ENCODE measurements at regions of chr14 and their contacts with region 1.

Region 1: GRCh38 chr14:24160850-24161804 is at the start of gene IRF9:
- DNase-seq: peak; percentile 94
- CTCF ChIP-seq: peak; percentile 92

Region 2: GRCh38 chr14:24058260-24058950 is 102.7 kb before region 1 on chr14:
- CTCF ChIA-PET with region 1: interaction called, 14 read pairs
- POLR2A ChIA-PET with region 1: no interaction called
- DNase-seq: peak; percentile 70
- CTCF ChIP-seq: peak; percentile 73

Region 3: DNA sequence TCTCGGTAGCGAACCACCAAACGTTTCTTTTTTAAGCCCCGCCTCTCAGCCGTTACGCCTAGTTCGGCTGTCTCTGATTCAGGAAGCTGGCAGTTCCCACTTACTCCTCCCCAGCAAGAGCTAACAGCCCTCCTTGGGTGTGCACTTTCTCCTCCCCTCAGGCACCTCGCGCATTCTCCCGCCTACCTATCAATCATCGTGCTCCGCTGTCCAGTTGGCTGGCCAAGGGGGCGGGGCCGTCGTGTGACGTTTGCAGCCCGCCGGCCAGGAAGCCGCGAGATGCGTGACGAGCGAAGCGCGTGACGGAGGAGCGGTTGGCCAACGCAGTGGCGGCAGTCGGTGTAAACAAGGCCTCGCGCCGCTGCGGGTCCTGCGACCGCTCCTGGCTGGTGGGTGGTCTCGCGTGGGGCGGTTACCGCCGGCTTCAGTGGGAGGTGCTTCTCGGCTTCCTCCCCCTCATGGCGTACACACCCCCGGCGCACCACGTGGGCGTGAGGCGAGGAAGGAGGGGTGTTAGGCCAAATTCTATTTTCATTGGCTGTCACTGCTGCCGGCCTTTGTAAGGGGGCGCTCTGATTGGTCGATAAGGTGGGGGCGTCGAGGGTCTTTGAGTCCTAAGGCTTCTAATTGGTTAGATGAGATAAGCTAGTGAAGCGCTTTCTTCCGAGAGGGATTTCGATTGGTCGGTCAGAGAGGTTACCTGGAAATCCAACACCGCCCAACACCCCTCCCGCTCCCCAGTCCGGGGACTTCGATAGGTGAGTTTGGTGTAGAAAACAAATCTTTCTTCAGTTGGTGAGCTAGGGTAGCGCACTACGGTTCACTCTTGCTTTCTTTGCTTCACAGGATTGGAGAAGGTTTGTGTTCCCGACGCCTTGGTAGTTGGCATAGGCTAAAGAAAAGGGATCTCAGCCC is 46.3 kb before region 1 on chr14 and contains the starts of genes DCAF11 and NRL:
- CTCF ChIA-PET with region 1: interaction called, 30 read pairs
- POLR2A ChIA-PET with region 1: interaction called, 14 read pairs
- DNase-seq: peak; percentile 98
- CTCF ChIP-seq: no peak

Region 4: DNA sequence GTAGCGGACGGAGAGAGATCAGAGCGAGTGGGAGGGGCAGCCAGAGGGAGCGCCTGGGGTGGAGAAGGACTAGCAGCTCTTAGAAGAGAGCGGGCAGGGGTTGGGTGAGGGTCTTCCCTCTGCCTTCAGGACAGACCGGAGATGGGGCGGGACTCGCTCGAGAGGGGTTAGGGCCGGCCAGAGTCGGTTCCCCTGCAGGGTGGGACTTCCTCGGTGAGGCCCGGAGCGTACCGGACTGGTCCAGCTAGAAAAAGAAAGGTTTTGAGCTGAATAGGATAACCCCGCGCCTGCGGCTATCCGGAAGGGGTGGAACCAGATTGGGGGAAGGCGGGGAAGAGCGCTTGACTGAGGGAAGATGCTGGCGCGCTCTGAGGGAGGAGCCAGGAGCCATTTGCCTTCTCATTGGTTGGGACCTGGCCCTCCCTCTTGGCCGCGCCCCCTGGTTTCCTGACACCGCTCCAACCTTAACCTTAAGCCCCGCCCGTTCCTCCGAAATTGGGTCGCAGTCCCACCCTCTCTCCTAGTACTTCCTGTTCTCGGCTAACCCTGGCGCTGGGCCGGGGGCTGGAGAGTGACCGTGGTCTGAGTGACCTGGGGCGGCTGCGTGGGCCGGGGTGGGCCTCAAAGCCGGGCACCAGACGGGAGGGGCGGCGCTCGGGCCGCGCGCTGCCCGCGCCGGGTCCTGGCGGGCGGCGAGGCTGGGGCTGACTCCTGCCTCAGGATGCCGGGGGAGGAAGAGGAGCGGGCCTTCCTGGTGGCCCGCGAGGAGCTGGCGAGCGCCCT is 14.0 kb before region 1 on chr14 and contains the start of gene RNF31:
- CTCF ChIA-PET with region 1: interaction called, 154 read pairs
- POLR2A ChIA-PET with region 1: interaction called, 12 read pairs
- DNase-seq: peak; percentile 97
- CTCF ChIP-seq: no peak

Region 5: DNA sequence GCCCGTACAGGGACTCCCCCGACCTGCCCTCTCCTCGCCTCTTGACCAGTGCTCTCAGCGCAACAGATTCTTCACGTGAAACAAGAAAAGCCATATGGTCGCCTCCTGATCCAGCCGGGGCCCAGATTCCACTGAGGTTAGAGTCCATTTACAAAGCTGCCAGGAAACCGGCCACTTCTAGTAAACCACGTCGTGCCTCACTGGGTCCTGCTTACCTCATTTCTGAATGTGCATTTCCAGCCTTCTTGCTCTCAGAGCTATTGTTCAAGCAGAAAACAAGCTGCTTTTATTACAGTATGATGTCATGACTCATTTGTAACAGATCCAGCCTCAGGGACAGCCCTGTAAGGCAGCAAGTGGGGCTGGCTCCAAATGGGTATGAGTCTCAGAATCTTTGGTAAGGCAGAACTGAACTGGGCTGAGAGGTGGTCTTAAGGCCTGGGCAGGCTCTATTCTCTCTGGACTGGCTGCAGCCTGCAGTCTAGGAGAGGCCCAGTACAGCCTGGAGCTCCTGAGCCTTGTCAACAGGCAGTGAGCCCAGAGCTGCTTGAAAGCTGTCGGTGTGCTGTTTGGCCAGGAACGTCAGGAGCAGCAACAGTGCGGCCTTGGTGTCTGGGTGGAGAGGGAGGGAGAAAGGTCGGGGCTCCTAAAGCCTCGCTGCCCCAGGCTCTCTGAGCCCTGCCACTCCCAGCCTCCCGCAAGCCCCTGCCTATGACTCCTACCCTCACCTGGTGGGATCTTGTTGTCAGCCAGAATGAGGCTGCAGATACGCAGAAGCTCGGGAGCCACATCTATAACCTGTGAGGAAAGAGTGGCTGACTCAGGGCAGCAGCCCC is 19.1 kb after region 1 on chr14:
- CTCF ChIA-PET with region 1: interaction called, 35 read pairs
- POLR2A ChIA-PET with region 1: interaction called, 13 read pairs
- DNase-seq: no peak
- CTCF ChIP-seq: no peak

Region 6: GRCh38 chr14:24215495-24216344 is 54.6 kb after region 1 on chr14 and contains the start of gene MDP1:
- CTCF ChIA-PET with region 1: interaction called, 12 read pairs
- POLR2A ChIA-PET with region 1: interaction called, 3 read pairs
- DNase-seq: peak; percentile 91
- CTCF ChIP-seq: peak; percentile 97

Measured in GM10248 (cell line).